Activated T-helper 1 cell treated with anti-CD3 and anti-CD28 coated beads, Interleukin-12 subunit alpha, Interleukin-12 subunit beta, Interleukin-2, Interleukin-4 antibody, amounts not matched to agents 30 ng/mL and 10 ng/mL and 1 ng/mL, durations not matched to agents 14 hours and 24 hours and 36 hours (primary cell): ENCODE measurements at regions of chr3 and their contacts with region 1.

Region 1: GRCh38 chr3:4303187-4304123 is at the start of gene SETMAR:
- DNase-seq: peak; percentile 75
- H3K4me3 Mint-ChIP-seq: peak within 1 kb of the TSS; percentile 93
- H3K27ac Mint-ChIP-seq: peak within 1 kb of the TSS; percentile 99
- H3K4me1 Mint-ChIP-seq: peaks cover 23% of the 10 kb centered on the region
- H3K27me3 Mint-ChIP-seq: no peaks in the 10 kb centered on the region
- total RNA-seq, gene SETMAR: 17.8 and 18.7 TPM in 2 replicates

Region 2: GRCh38 chr3:3126477-3127431 is 1176.7 kb before region 1 on chr3 and contains the start of gene TRNT1:
- intact Hi-C with region 1: loop called (anchors 2 kb)
- DNase-seq: peak; percentile 91
- H3K4me3 Mint-ChIP-seq: peak within 1 kb of the TSS; percentile 99
- H3K27ac Mint-ChIP-seq: peak within 1 kb of the TSS; percentile 99
- H3K4me1 Mint-ChIP-seq: peaks cover 30% of the 10 kb centered on the region
- H3K27me3 Mint-ChIP-seq: peaks cover 2% of the 10 kb centered on the region
- total RNA-seq, gene TRNT1: 52.4 and 53.5 TPM in 2 replicates

Region 3: DNA sequence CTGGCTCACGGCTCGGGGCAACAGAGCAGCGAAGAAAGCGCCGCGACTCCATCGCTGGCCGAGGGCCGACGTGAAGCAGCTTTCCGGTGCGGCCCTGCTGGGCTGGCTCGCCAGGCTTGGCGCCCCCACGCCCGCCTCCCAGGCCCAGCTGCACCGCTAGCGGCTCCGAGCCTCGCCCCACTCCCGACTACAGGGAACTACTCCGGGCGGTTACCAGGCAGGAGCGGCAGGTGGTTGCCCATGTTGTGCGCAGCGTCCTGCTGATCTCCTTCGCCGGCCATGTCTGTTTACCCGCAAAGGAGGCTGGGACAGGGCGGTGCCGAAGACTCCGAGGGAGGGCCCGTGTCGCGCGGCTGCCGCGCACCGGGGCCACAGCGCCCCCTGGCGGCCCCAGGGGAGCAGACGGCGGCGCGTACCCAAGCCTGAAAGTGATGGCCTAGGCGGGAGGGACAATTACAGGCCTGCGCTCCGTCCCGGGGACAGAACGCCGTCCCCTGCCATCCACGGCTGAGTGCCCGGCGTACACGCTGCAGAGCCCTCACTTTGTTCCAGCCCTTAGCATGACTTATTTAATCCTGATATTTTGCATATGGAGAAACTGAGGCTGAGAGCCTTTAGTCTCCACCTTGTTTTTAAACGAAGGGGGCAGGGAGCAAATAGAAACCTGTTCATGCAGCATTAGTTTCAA is 1123.9 kb before region 1 on chr3 and contains the start of gene CRBN:
- intact Hi-C with region 1: loop called (anchors 1 kb)
- DNase-seq: peak; percentile 86
- H3K4me3 Mint-ChIP-seq: peak within 1 kb of the TSS; percentile 96
- H3K27ac Mint-ChIP-seq: peak within 1 kb of the TSS; percentile 85
- H3K4me1 Mint-ChIP-seq: peaks cover 48% of the 10 kb centered on the region
- H3K27me3 Mint-ChIP-seq: peaks cover 3% of the 10 kb centered on the region
- total RNA-seq, gene CRBN: 36.8 and 42.5 TPM in 2 replicates

Region 4: GRCh38 chr3:4466741-4467521 is 163.5 kb after region 1 on chr3 and contains the start of gene SUMF1:
- intact Hi-C with region 1: loop called (anchors 1 kb)
- DNase-seq: peak; percentile 68
- H3K4me3 Mint-ChIP-seq: peak within 1 kb of the TSS; percentile 95
- H3K27ac Mint-ChIP-seq: peak within 1 kb of the TSS; percentile 91
- H3K4me1 Mint-ChIP-seq: peaks cover 15% of the 10 kb centered on the region
- H3K27me3 Mint-ChIP-seq: peaks cover 2% of the 10 kb centered on the region
- total RNA-seq, gene SUMF1: 6.1 and 7.0 TPM in 2 replicates

Region 5: DNA sequence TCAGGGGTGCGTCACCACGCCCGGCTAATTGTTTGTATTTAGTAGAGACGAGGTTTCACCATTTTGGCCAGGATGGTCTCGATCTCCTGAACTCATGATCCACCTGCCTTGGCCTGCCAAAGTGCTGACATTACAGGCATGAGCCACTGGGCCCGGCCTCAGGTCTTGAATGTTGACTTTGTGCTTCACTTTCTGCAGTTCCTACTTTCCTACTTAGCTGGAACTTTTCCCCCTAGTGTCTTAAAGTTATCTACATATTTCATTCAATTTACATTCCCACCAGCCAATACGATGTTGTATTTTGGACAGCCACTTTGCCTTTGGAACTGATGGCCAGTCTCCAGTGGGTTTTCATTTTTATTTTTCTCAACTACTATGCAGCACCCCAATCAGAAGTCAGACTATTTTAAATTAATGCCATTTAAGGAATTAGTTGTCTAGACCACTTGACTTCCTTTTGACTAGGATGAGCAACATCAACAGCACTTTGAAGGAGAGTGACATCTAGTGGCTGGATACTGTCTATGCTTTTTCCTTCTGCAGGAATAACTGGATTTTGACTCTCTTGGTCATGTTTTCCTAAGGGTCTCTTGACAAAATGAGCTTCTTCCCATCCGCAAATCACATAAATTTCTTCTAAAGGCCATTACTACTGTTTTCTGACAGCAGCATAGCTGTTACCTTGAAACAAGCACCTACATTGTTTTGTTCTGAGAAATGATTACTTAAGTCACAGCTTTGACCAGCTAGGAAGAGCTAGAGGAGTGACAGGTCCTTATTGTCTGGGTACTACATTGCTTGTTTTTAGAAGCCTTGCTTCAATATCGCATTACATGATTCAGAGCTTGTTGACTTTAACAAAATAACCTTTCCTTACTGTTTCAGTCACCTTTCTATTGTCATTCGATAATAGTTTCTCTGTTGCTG is 329.9 kb after region 1 on chr3:
- intact Hi-C with region 1: loop called (anchors 5 kb)
- DNase-seq: no peak
- H3K4me3 Mint-ChIP-seq: no peak overlapping the region
- H3K27ac Mint-ChIP-seq: peak overlapping the region; percentile 6
- H3K4me1 Mint-ChIP-seq: peaks cover 8% of the 10 kb centered on the region
- H3K27me3 Mint-ChIP-seq: no peaks in the 10 kb centered on the region

Region 6: DNA sequence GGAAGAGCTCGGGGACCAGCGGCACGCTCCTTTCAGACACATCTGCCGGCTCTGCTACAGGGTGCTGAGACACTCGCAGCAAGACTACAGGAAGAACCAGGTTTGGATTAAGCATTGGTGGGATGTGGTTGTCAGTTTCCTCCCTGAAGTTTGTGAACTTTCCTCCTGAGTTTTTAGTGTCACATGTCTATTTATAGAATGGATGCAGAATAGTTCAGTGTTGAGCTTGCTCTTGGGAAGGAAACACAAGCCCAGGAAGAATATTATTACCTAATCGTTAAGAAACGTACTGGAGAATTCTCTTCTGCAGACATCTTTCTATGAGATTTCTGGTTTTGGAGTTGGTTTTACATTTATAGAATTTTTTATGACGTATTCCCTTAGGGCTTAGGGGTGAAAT is 361.7 kb after region 1 on chr3:
- intact Hi-C with region 1: no loop called
- DNase-seq: no peak
- H3K4me3 Mint-ChIP-seq: no peak overlapping the region
- H3K27ac Mint-ChIP-seq: no peak overlapping the region
- H3K4me1 Mint-ChIP-seq: no peaks in the 10 kb centered on the region
- H3K27me3 Mint-ChIP-seq: no peaks in the 10 kb centered on the region

Region 7: GRCh38 chr3:5122030-5122740 is 818.7 kb after region 1 on chr3 and contains the start of gene ARL8B:
- intact Hi-C with region 1: loop called (anchors 2 kb)
- DNase-seq: peak; percentile 90
- H3K4me3 Mint-ChIP-seq: peak within 1 kb of the TSS; percentile 88
- H3K27ac Mint-ChIP-seq: peak within 1 kb of the TSS; percentile 87
- H3K4me1 Mint-ChIP-seq: peaks cover 40% of the 10 kb centered on the region
- H3K27me3 Mint-ChIP-seq: no peaks in the 10 kb centered on the region
- total RNA-seq, gene ARL8B: 43.4 and 51.0 TPM in 2 replicates

Region 8: DNA sequence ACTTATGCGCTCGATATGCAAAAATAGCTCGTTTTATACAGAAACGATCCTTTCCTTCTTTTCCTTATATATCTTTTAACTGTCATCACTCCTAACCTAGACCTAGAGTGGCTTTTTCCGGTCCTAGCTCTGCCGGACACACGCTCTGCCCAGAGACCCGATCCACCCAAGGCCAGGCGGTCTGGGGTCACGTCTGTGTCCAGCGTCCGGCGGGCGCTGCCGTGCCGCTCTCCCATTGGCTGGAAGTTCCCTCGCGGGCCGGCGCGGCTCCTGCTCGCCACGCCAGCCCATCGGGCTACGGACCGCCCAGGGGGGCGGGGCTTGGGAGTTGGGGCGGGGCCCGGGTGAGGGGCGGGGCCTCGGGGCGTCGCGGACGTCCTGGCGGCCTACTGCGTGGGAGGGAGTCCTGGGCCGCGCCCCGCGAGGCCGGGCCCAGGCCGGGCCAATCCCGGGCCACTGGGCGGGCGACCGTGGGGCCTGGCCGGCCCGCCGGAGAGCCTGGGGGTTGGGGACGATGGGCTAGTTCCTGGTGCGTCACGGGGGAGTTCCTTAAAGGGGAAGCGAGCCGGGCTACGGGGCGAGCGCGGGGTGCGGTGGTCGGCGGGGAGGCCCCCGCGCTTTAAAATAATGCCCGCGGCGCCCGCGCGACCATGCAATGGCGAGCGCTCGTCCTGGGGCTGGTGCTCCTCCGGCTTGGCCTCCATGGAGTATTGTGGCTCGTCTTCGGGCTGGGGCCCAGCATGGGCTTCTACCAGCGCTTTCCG is 883.9 kb after region 1 on chr3 and contains the start of gene EDEM1:
- intact Hi-C with region 1: loop called (anchors 1 kb)
- DNase-seq: peak; percentile 96
- H3K4me3 Mint-ChIP-seq: peak within 1 kb of the TSS; percentile 93
- H3K27ac Mint-ChIP-seq: peak within 1 kb of the TSS; percentile 98
- H3K4me1 Mint-ChIP-seq: peaks cover 39% of the 10 kb centered on the region
- H3K27me3 Mint-ChIP-seq: no peaks in the 10 kb centered on the region
- total RNA-seq, gene EDEM1: 169 and 192 TPM in 2 replicates